ENCODE measurements at regions of chr10 and their contacts with region 1.

Region 1: GRCh38 chr10:117320050-117320665 is 55.1 kb downstream of the PDZD8 start:
- DNase-seq: no peak
- ATAC-seq: peak; percentile 84
- H3K4me3 ChIP-seq: no peak overlapping the region
- H3K27ac ChIP-seq: no peak overlapping the region
- H3K4me1 ChIP-seq: no peaks in the 10 kb centered on the region
- H3K27me3 ChIP-seq: no peaks in the 10 kb centered on the region
- CTCF ChIP-seq: peak; percentile 71 to 95 (median 83)
- POLR2A ChIP-seq: no peak
- RAD21 ChIP-seq: peak; percentile 77

Region 2: GRCh38 chr10:117226824-117227451 is 93.2 kb before region 1 on chr10:
- CTCF ChIA-PET with region 1: interaction called, 39 read pairs
- POLR2A ChIA-PET with region 1: no interaction called
- RAD21 ChIA-PET with region 1: interaction called, 3 to 5 read pairs
- intact Hi-C with region 1: no loop called
- DNase-seq: peak; percentile 67
- ATAC-seq: peak; percentile 98
- H3K4me3 ChIP-seq: no peak overlapping the region
- H3K27ac ChIP-seq: no peak overlapping the region
- H3K4me1 ChIP-seq: peaks cover 0 to under 1% of the 10 kb centered on the region in 2 experiments; a peak in 1 of 4 replicates
- H3K27me3 ChIP-seq: peaks cover 28% of the 10 kb centered on the region; the same call in 1 of the 2 replicates
- CTCF ChIP-seq: peak; percentile 91 to 96 (median 91)
- POLR2A ChIP-seq: no peak
- RAD21 ChIP-seq: peak; percentile 91

Region 3: GRCh38 chr10:117306674-117307073 is 13.5 kb before region 1 on chr10:
- CTCF ChIA-PET with region 1: interaction called, 30 read pairs
- POLR2A ChIA-PET with region 1: interaction called, 4 read pairs
- RAD21 ChIA-PET with region 1: no interaction called
- intact Hi-C with region 1: no loop called
- DNase-seq: no peak
- ATAC-seq: no peak
- H3K4me3 ChIP-seq: no peak overlapping the region
- H3K27ac ChIP-seq: no peak overlapping the region
- H3K4me1 ChIP-seq: no peaks in the 10 kb centered on the region
- H3K27me3 ChIP-seq: no peaks in the 10 kb centered on the region
- CTCF ChIP-seq: no peak
- POLR2A ChIP-seq: no peak
- RAD21 ChIP-seq: no peak

Measured in HCT116 (cell line).